ENCODE measurements at regions of chr1 and their contacts with region 1.

Region 1: GRCh38 chr1:8026153-8026975 is at the start of gene ERRFI1:
- DNase-seq: peak; percentile 84
- H3K4me3 Mint-ChIP-seq: peak within 1 kb of the TSS; percentile 70
- H3K27ac Mint-ChIP-seq: peak within 1 kb of the TSS; percentile 20
- H3K4me1 Mint-ChIP-seq: peaks cover 9% of the 10 kb centered on the region
- H3K27me3 Mint-ChIP-seq: peaks cover 19% of the 10 kb centered on the region
- total RNA-seq, gene ERRFI1: 0.77 to 0.95 TPM

Region 2: DNA sequence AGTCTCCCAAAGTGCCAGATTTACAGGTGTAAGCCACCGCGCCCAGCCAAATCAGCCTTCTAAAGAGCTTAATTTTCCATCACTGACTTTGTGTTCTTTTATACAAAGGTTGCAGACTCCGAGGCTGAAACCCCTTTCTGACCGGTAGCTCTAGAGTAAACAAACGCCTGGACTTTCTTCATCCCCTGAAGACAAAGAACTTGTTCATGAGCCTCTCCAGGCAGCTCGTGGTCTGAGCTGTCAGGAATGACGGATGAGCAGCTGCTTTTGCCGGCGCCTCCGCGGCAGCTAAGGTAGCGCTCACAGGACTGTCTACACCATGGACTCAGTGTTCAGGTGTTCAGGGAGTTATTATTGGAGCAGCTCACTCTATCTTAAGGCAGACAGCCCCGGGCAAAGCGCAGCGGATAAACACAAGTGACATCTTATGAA is 128.3 kb after region 1 on chr1:
- CTCF ChIA-PET with region 1: no interaction called
- intact Hi-C with region 1: loop called (anchors 1 kb)
- DNase-seq: no peak
- H3K4me3 Mint-ChIP-seq: no peak overlapping the region
- H3K27ac Mint-ChIP-seq: no peak overlapping the region
- H3K4me1 Mint-ChIP-seq: peaks cover 42% of the 10 kb centered on the region
- H3K27me3 Mint-ChIP-seq: peaks cover 7% of the 10 kb centered on the region

Region 3: GRCh38 chr1:8169364-8170058 is 143.1 kb after region 1 on chr1:
- CTCF ChIA-PET with region 1: no interaction called
- intact Hi-C with region 1: loop called (anchors 5 kb)
- DNase-seq: peak; percentile 72
- H3K4me3 Mint-ChIP-seq: peak overlapping the region; percentile 57
- H3K27ac Mint-ChIP-seq: peak overlapping the region; percentile 91
- H3K4me1 Mint-ChIP-seq: peaks cover 29% of the 10 kb centered on the region
- H3K27me3 Mint-ChIP-seq: no peaks in the 10 kb centered on the region

Region 4: GRCh38 chr1:8211589-8212442 is 185.5 kb after region 1 on chr1:
- CTCF ChIA-PET with region 1: no interaction called
- intact Hi-C with region 1: loop called (anchors 10 kb)
- DNase-seq: peak; percentile 22
- H3K4me3 Mint-ChIP-seq: no peak overlapping the region
- H3K27ac Mint-ChIP-seq: no peak overlapping the region
- H3K4me1 Mint-ChIP-seq: peaks cover 15% of the 10 kb centered on the region
- H3K27me3 Mint-ChIP-seq: peaks cover 30% of the 10 kb centered on the region

Region 5: DNA sequence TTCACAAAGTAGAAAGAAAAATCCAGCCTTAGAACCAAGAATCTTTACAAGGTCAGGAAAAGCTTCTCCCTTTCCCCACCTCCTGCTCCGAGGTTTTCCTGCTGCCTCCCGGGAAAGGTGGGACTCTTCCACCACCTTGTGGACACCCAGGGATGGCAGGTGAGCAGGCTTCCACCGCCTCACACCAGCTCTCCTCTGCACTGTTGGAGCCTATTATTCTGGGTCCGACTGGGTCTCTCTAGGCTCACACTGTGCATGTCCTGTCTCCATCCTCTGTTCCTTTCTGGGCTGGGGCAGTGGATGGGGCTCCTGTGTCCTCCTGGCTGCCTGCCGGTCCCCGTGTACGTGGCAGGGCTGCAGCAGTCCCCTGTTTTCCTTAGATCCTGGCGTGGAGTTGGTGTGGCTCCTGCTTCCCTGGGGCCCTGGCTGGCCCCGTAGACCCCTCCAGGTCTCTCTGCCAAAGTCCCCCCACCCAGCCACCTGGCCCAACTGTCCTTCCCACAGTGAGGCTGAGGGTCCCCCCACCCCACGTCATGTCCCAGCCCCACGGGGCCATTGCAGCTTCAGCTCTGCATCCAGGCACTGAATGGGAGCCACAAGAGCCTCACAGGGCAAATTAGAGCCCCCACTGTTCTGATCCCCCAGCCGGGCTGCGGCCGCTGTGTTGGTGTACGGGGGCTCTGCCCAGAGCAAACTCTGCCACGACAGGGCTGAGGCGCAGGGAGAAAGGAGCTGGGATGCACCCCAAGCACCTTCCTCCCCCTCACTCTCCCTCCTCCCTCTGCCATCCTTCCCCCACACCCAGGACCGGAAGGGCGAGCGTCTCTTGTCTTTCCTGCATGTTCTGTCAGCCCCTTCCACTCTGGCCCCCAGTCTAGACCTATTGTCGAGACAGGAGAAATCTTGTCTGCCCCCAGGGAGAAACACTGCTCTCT is 288.2 kb after region 1 on chr1:
- CTCF ChIA-PET with region 1: interaction called, 31 read pairs
- intact Hi-C with region 1: loop called (anchors 1 kb)
- DNase-seq: peak; percentile 70
- H3K4me3 Mint-ChIP-seq: no peak overlapping the region
- H3K27ac Mint-ChIP-seq: no peak overlapping the region
- H3K4me1 Mint-ChIP-seq: peaks cover 9% of the 10 kb centered on the region
- H3K27me3 Mint-ChIP-seq: peaks cover 15% of the 10 kb centered on the region

Region 6: DNA sequence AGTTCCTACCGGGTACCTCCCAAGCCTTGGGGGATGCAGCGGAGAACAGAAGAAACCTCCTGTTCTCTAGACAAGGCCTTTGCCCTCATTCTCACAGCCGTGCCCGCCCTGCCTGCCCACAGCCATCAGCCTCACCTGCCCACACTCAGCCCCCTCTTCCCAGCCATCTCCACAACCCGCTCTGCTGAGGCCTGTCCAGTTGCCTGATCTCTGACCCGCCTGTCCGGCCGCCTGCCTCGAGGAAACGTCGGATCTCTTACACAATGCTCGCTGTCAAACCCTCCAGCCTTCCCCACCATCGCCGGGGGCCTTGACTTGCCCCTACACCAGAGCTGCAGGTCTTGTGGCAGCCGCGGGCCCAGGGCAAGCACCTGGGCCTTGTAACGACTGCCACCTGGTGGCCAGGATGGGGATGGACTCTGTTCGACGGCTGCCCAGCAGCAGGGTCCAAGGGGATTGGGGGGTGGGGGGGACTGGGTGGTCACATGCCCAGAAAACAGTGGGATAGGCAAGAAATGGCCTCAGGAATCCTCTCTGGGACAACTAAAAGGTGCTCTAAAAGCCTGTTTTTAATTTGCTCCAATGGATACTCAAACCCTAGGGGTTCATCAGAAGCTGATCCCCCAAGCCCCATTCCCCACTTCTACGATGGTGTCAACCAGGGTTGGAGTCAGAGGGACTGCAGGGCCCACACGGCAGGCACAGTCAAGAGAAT is 322.6 kb after region 1 on chr1:
- CTCF ChIA-PET with region 1: interaction called, 4 read pairs
- intact Hi-C with region 1: loop called (anchors 1 kb)
- DNase-seq: peak; percentile 75
- H3K4me3 Mint-ChIP-seq: no peak overlapping the region
- H3K27ac Mint-ChIP-seq: no peak overlapping the region
- H3K4me1 Mint-ChIP-seq: peaks cover 4% of the 10 kb centered on the region
- H3K27me3 Mint-ChIP-seq: no peaks in the 10 kb centered on the region

Measured in activated naive CD4-positive, alpha-beta T cell treated with anti-CD3 and anti-CD28 coated beads for 36 hours (primary cell).